Calu3 (cell line): ENCODE measurements at regions of chr9 and their contacts with region 1.

Region 1: GRCh38 chr9:5586391-5586802 is 42.5 kb upstream of the RIC1 start:
- DNase-seq: no peak
- H3K4me3 Mint-ChIP-seq: no peak overlapping the region
- H3K27ac Mint-ChIP-seq: no peak overlapping the region
- H3K4me1 Mint-ChIP-seq: no peaks in the 10 kb centered on the region
- H3K27me3 Mint-ChIP-seq: no peaks in the 10 kb centered on the region
- CTCF ChIP-seq: no peak

Region 2: GRCh38 chr9:5450359-5451091 is 135.9 kb before region 1 on chr9 and contains the start of gene CD274:
- CTCF ChIA-PET with region 1: interaction called, 5 read pairs
- intact Hi-C with region 1: loop called (anchors 1 kb)
- DNase-seq: peak; percentile 90
- H3K4me3 Mint-ChIP-seq: peak within 1 kb of the TSS; percentile 79
- H3K27ac Mint-ChIP-seq: peak within 1 kb of the TSS; percentile 76
- H3K4me1 Mint-ChIP-seq: peaks cover 41% of the 10 kb centered on the region
- H3K27me3 Mint-ChIP-seq: no peaks in the 10 kb centered on the region
- CTCF ChIP-seq: no peak
- total RNA-seq, gene CD274: 1.9 and 3.6 TPM in 2 replicates